CD4-positive, alpha-beta T cell (primary cell): ENCODE measurements at regions of chr4 and their contacts with region 1.

Region 1: DNA sequence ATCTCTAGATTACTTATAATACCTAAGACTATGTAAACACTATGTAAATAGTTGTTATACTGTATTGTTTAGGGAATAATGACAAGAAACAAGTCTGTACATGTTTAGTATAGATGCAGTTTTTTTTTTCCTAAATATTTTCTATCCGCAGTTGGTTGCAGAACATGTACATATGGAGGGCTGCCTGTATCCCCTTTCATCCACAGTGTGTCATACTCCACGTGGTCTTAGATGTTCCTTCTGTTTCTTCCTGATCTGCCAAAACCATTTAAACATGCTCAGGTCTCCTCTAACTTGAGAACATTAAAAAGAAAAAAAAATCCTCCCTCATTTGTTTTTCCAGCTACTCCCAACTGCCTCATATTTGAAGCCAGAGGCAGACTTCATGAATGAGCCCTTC is 14.0 kb downstream of the OCIAD1 start:
- DNase-seq: no peak
- ATAC-seq: no peak
- H3K4me3 ChIP-seq: no peak overlapping the region
- H3K4me3 Mint-ChIP-seq: no peak overlapping the region
- H3K27ac ChIP-seq: no peak overlapping the region
- H3K27ac Mint-ChIP-seq: no peak overlapping the region
- H3K4me1 ChIP-seq: no peaks in the 10 kb centered on the region
- H3K4me1 Mint-ChIP-seq: peaks cover 16% of the 10 kb centered on the region
- H3K27me3 ChIP-seq: no peaks in the 10 kb centered on the region
- H3K27me3 Mint-ChIP-seq: no peaks in the 10 kb centered on the region
- CTCF ChIP-seq: no peak

Region 2: GRCh38 chr4:48340965-48341775 is 503.7 kb before region 1 on chr4 and contains the start of gene SLAIN2:
- CTCF ChIA-PET with region 1: no interaction called
- POLR2A ChIA-PET with region 1: no interaction called
- intact Hi-C with region 1: no loop called
- DNase-seq: peak; percentile 92 to 100 (median 98)
- ATAC-seq: peak; percentile 81
- H3K4me3 ChIP-seq: peak within 1 kb of the TSS; percentile 82
- H3K4me3 Mint-ChIP-seq: peak within 1 kb of the TSS; percentile 100
- H3K27ac ChIP-seq: peak within 1 kb of the TSS; percentile 91 to 95
- H3K27ac Mint-ChIP-seq: peak within 1 kb of the TSS; percentile 98
- H3K4me1 ChIP-seq: peaks cover 18% of the 10 kb centered on the region
- H3K4me1 Mint-ChIP-seq: peaks cover 54% of the 10 kb centered on the region
- H3K27me3 ChIP-seq: no peaks in the 10 kb centered on the region
- H3K27me3 Mint-ChIP-seq: no peaks in the 10 kb centered on the region
- CTCF ChIP-seq: peak; percentile 36
- total RNA-seq, gene SLAIN2: 46.3 to 47.0 TPM

Region 3: GRCh38 chr4:48891028-48891619 is 46.3 kb after region 1 on chr4:
- CTCF ChIA-PET with region 1: no interaction called
- POLR2A ChIA-PET with region 1: no interaction called
- intact Hi-C with region 1: loop called in 1 of 2 experiments (anchors 5 kb)
- DNase-seq: no peak
- ATAC-seq: no peak
- H3K4me3 ChIP-seq: no peak overlapping the region
- H3K4me3 Mint-ChIP-seq: no peak overlapping the region
- H3K27ac ChIP-seq: no peak overlapping the region
- H3K27ac Mint-ChIP-seq: no peak overlapping the region
- H3K4me1 ChIP-seq: no peaks in the 10 kb centered on the region
- H3K4me1 Mint-ChIP-seq: peaks cover 10% of the 10 kb centered on the region
- H3K27me3 ChIP-seq: no peaks in the 10 kb centered on the region
- H3K27me3 Mint-ChIP-seq: no peaks in the 10 kb centered on the region
- CTCF ChIP-seq: no peak